Heart left ventricle (tissue), 16 donors: ENCODE measurements at regions of chr7 and their contacts with region 1.

Region 1: GRCh38 chr7:35753761-35754603 is 46.9 kb upstream of the SEPTIN7 start:
- DNase-seq: peak; percentile 61 to 78 (median 68)
- ATAC-seq: peak; percentile 67 to 88 (median 82)
- H3K4me3 ChIP-seq: no peak overlapping the region
- H3K27ac ChIP-seq: peak overlapping the region; percentile 6 to 75 (median 50)
- H3K4me1 ChIP-seq: peaks cover 0 to 58% (median 18%) of the 10 kb centered on the region in 12 donors
- H3K27me3 ChIP-seq: no peaks in the 10 kb centered on the region
- CTCF ChIP-seq: no peak
- POLR2A ChIP-seq: no peak

Region 2: DNA sequence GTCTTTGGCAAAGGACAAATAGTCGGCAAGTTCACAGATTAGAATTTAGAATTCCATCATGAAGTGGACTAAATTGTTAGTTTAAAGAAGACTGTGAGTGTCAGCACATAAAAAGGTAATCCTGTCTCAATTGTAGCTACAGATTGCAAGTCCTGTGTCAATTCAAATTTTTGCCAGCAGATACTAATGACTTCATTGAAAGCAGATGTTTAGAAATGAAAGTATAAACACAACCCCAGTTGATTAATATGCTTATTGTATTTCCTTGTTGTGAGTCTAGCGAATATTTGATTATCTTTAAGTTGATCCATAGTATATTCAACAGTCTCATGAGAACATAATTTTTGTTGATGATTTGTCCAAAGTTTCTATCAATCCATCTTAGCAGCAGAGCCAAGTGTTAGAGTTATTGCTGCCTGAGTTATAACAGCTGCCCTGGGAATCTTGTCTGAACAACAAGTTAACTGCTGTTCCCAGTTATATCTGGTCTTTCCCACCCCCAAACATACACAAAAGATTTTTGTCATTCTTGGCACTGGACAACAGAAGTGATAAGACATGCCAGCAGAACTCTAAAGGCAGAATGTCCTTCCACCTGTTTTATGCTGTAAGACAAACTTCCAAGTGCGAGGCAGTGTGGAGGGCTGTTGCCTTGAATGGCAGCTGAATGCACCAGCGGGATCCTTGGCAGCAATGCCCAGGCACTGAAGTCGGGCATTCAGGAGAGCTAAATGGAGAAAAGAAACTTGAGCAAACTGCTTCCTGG is 37.8 kb before region 1 on chr7:
- intact Hi-C with region 1: loop called in 1 of 10 experiments (anchors 5 kb)
- DNase-seq: peak in 3 of 5 donors; percentile 41 to 60 (median 57)
- ATAC-seq: peak; percentile 52 to 73 (median 72)
- H3K4me3 ChIP-seq: peak overlapping the region in 10 of 12 donors; percentile 1 to 51 (median 41)
- H3K27ac ChIP-seq: peak overlapping the region in 11 of 12 donors; percentile 46 to 82 (median 71)
- H3K4me1 ChIP-seq: peaks cover 0 to 43% (median 7%) of the 10 kb centered on the region in 12 donors
- H3K27me3 ChIP-seq: no peaks in the 10 kb centered on the region
- CTCF ChIP-seq: no peak
- POLR2A ChIP-seq: no peak

Region 3: DNA sequence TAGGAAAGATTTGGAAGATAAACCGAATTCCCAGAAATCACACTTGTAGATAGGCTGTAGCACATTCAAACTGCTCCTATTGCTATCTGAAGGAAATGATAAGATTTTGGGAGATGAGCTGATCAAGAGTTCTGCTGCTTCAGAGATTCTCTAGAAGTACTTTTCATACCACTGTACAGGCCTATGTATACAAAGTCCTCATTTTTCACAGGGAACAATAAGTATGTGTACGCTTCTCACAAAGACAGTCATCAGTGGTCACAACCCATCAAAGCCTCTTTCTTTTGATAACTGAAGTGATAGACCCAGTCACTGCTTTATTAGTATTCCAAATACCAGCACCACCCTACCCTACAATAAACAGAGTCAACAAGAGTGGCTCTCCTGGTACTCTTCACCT is 31.3 kb after region 1 on chr7:
- intact Hi-C with region 1: no loop called
- DNase-seq: no peak
- ATAC-seq: no peak
- H3K4me3 ChIP-seq: no peak overlapping the region
- H3K27ac ChIP-seq: no peak overlapping the region
- H3K4me1 ChIP-seq: no peaks in the 10 kb centered on the region
- H3K27me3 ChIP-seq: no peaks in the 10 kb centered on the region
- CTCF ChIP-seq: no peak
- POLR2A ChIP-seq: no peak